GM12878 (cell line): ENCODE measurements at regions of chr15 and their contacts with region 1.

Region 1: DNA sequence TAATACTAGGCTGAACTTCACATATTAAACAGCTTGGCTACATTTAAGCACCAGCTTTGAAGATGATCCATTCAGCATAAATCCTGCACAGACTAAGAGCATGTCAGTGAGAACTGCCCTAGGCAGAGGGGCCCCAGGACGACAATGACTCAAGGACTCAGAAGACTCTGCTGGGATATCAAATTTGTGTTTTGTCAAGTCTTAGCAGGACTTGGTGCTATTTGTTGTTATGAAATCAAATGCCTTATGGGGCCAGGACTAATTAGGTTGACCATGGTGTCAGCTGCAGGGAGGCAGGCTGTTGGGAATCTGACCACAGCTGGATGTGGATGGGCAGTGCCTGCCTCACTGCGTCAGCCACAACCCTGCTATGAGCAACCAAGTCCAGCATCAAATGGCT is 91.8 kb downstream of the RYR3 start:
- DNase-seq: no peak
- ATAC-seq: no peak
- H3K4me3 ChIP-seq: no peak overlapping the region
- H3K27ac ChIP-seq: no peak overlapping the region
- H3K4me1 ChIP-seq: no peaks in the 10 kb centered on the region
- H3K27me3 ChIP-seq: no peaks in the 10 kb centered on the region; a peak in 2 of 4 replicates
- CTCF ChIP-seq: no peak
- EP300 ChIP-seq: no peak
- POLR2A ChIP-seq: no peak
- RAD21 ChIP-seq: no peak

Region 2: DNA sequence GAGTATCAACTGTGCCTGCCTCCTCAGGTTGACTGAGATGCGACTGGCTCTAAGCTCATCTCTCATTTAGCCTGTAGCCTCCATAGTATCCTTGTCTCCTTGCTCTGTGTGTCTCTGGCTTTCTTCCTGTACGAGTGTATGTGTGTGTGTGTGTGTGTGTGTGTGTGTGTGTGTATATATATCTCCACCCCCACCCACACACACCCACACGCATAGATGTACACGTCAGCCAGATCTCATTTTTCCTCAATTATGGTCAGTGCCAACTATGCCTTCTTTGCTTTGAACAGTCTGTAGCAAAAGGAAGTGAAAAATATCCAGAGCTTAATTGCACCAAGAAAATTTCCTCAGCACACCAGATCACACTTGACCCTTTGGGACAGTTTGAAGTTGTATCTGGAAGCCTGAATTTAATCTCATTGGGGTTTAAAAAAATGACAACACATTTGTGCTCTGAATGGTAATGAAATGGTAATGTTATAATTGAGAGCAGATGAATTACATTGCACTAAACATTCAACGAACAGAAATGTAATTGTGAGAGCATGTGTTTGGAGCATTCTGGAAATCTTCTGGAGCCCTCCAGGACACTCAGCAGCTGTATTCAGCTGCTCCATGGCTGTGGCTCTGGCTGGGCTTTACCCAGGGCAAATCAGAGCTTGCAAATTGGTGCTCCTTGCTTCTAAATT is 28.2 kb before region 1 on chr15:
- CTCF ChIA-PET with region 1: no interaction called
- POLR2A ChIA-PET with region 1: no interaction called
- RAD21 ChIA-PET with region 1: no interaction called
- SMC1A ChIA-PET with region 1: no interaction called
- in situ Hi-C with region 1: no loop called
- intact Hi-C with region 1: loop called (anchors 1 kb)
- DNase-seq: no peak
- ATAC-seq: no peak
- H3K4me3 ChIP-seq: no peak overlapping the region
- H3K27ac ChIP-seq: no peak overlapping the region
- H3K4me1 ChIP-seq: no peaks in the 10 kb centered on the region
- H3K27me3 ChIP-seq: no peaks in the 10 kb centered on the region
- CTCF ChIP-seq: no peak
- EP300 ChIP-seq: no peak
- POLR2A ChIP-seq: no peak
- RAD21 ChIP-seq: no peak

Region 3: DNA sequence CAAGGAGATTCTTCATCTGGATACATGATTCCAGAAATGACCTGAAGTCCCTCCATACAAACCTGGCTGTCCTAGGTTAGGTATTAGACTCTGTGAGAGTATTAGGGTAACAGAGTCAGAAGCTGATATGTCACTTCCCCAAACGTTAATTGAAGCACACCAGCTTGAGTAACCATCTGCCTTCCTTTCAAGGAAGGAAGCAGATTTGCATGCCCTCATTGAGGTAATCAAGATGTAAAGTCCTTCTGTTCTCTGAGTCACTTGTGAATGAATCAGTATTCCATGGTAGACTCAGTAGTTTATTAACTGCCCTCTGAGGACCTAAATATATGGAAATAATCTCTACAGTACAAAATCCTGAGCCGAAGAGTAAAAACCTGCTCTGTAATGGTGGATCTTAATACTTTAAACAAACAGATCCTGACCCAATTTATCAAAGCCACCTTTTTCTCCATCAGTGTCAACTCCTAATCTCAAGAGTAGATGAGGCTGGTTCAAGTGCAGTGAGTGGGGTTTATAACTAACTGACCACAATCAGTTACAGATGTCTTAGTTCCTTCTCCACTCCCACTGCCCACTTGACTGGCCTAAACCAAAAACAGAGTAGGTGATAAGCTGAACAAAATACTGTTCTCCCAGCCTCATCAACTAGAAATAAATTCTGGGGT is 319.5 kb after region 1 on chr15:
- CTCF ChIA-PET with region 1: no interaction called
- POLR2A ChIA-PET with region 1: no interaction called
- RAD21 ChIA-PET with region 1: no interaction called
- SMC1A ChIA-PET with region 1: no interaction called
- in situ Hi-C with region 1: no loop called
- intact Hi-C with region 1: no loop called
- DNase-seq: peak; percentile 24
- ATAC-seq: peak; percentile 52
- H3K4me3 ChIP-seq: no peak overlapping the region
- H3K27ac ChIP-seq: no peak overlapping the region
- H3K4me1 ChIP-seq: no peaks in the 10 kb centered on the region
- H3K27me3 ChIP-seq: peaks cover 0 to 3% of the 10 kb centered on the region in 2 experiments; a peak in 1 of 4 replicates
- CTCF ChIP-seq: no peak
- EP300 ChIP-seq: no peak
- POLR2A ChIP-seq: no peak
- RAD21 ChIP-seq: no peak